ENCODE measurements at regions of chr15 and their contacts with region 1.

Region 1: GRCh38 chr15:28123408-28124023 is 24.4 kb upstream of the OCA2 start:
- DNase-seq: peak; percentile 77 to 83
- H3K4me3 ChIP-seq: no peak overlapping the region
- H3K27ac ChIP-seq: no peak overlapping the region
- H3K4me1 ChIP-seq: no peaks in the 10 kb centered on the region
- H3K27me3 ChIP-seq: no peaks in the 10 kb centered on the region
- CTCF ChIP-seq: peak; percentile 68 to 77

Region 2: GRCh38 chr15:27797765-27798164 is 325.8 kb before region 1 on chr15:
- intact Hi-C with region 1: no loop called
- DNase-seq: no peak
- H3K4me3 ChIP-seq: no peak overlapping the region
- H3K27ac ChIP-seq: no peak overlapping the region
- H3K4me1 ChIP-seq: no peaks in the 10 kb centered on the region
- H3K27me3 ChIP-seq: no peaks in the 10 kb centered on the region
- CTCF ChIP-seq: no peak

Region 3: GRCh38 chr15:27956285-27956684 is 167.2 kb before region 1 on chr15:
- intact Hi-C with region 1: no loop called
- DNase-seq: no peak
- H3K4me3 ChIP-seq: no peak overlapping the region
- H3K27ac ChIP-seq: no peak overlapping the region
- H3K4me1 ChIP-seq: no peaks in the 10 kb centered on the region
- H3K27me3 ChIP-seq: no peaks in the 10 kb centered on the region
- CTCF ChIP-seq: no peak

Region 4: DNA sequence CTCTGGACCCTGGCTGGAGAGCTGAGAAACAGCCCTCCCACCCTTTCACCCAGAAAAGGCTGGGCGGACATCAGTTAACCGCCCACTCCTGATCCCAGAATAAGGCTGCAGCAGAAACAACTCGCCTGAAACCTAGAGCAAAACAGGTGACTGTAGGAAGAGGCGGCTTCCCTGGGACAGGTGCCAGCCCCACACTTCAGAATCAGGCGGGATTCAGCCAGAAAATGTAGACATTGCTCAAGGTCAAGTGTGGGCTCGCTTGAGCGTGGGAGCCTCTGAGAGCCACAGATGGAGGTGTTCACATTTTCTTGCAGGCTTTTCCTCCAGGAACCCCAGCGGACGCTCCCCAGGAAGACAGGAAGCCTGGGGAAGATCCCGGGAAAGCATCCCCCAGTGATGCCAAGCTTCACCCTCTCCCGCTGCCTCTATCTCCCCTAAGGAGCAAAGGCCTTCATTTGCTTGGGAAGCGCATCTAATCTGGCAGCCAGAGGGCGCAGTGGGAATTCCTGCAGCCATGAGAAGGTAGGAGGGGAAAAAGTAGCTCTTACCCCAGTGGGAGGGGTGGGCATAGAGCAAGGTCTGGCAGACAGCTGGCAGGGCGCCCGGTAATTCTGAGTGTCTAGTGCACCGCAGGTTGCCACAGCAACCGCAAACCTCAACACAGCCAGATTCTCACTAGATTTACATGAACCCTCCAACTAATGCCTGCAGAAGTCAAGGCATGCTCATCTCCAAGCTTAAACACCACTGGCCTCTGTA is 102.1 kb before region 1 on chr15:
- intact Hi-C with region 1: loop called (anchors 10 kb)
- DNase-seq: no peak
- H3K4me3 ChIP-seq: no peak overlapping the region
- H3K27ac ChIP-seq: no peak overlapping the region
- H3K4me1 ChIP-seq: peaks cover 0 to 9% (median 2%) of the 10 kb centered on the region in 4 donors
- H3K27me3 ChIP-seq: no peaks in the 10 kb centered on the region
- CTCF ChIP-seq: peak; percentile 33 to 34

Region 5: GRCh38 chr15:28086175-28086703 is 37.3 kb before region 1 on chr15:
- intact Hi-C with region 1: loop called (anchors 5 kb)
- DNase-seq: peak; percentile 70 to 73
- H3K4me3 ChIP-seq: no peak overlapping the region
- H3K27ac ChIP-seq: peak overlapping the region in 1 of 2 donors; percentile 48
- H3K4me1 ChIP-seq: peaks cover 0 to 3% (median 0%) of the 10 kb centered on the region in 4 donors
- H3K27me3 ChIP-seq: no peaks in the 10 kb centered on the region
- CTCF ChIP-seq: peak; percentile 68 to 72